ENCODE measurements at regions of chr15 and their contacts with region 1.

Region 1: DNA sequence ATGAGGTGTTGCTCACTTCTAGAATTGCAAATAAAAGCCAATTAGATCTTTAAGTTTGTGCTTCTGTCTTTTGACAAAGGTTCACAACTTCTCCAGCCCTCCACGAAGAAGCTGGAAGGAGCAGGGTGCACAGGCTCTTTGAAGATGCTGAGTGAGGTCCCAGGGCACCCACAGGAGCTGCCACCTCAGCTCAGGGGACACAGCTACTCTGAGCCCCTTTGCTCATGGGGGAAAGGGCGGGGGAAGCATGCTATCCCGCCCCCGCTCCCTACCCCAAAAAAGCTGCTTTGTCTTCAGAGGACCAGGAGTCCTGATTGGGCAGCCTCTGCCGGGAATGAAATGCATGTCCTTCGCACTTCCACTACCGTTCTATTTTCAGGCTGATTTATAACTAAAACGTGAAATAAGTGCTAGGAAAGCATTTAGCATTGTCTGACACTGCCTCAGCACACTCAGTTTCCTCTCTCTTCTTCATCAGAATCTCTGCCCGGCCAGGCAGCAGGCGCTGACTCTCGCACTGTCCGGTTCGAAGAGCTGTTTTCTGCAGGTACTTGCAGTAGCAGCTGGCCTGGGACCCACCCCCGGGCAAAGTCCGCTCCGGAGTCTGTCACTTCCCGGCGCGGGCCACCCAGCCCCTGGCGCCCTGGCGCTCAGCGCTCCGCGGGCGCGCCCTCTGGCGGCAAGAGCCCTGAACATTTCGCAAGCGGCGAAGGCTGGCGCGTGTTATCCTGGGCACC is 45.5 kb upstream of the KLHL25 start:
- DNase-seq: peak; percentile 62 to 90 (median 79)
- ATAC-seq: peak; percentile 94
- H3K4me3 ChIP-seq: peak overlapping the region; percentile 27 to 33
- H3K4me3 Mint-ChIP-seq: peak overlapping the region; percentile 68
- H3K27ac ChIP-seq: no peak overlapping the region
- H3K27ac Mint-ChIP-seq: no peak overlapping the region
- H3K4me1 ChIP-seq: peaks cover 4% of the 10 kb centered on the region
- H3K4me1 Mint-ChIP-seq: no peaks in the 10 kb centered on the region
- H3K27me3 ChIP-seq: no peaks in the 10 kb centered on the region
- H3K27me3 Mint-ChIP-seq: peaks cover 5% of the 10 kb centered on the region
- CTCF ChIP-seq: peak; percentile 93

Region 2: GRCh38 chr15:85618956-85619491 is 221.2 kb before region 1 on chr15:
- CTCF ChIA-PET with region 1: no interaction called
- POLR2A ChIA-PET with region 1: no interaction called
- intact Hi-C with region 1: loop called in 1 of 2 experiments (anchors 2 kb)
- DNase-seq: peak in 8 of 9 experiments; percentile 30 to 82 (median 59)
- ATAC-seq: peak; percentile 84
- H3K4me3 ChIP-seq: peak overlapping the region in 1 of 2 experiments; percentile 27
- H3K4me3 Mint-ChIP-seq: no peak overlapping the region
- H3K27ac ChIP-seq: peak overlapping the region in 1 of 2 experiments; percentile 58
- H3K27ac Mint-ChIP-seq: no peak overlapping the region
- H3K4me1 ChIP-seq: peaks cover 38% of the 10 kb centered on the region
- H3K4me1 Mint-ChIP-seq: peaks cover 32% of the 10 kb centered on the region
- H3K27me3 ChIP-seq: no peaks in the 10 kb centered on the region
- H3K27me3 Mint-ChIP-seq: no peaks in the 10 kb centered on the region
- CTCF ChIP-seq: no peak

Region 3: GRCh38 chr15:85730001-85730820 is 110.0 kb before region 1 on chr15:
- CTCF ChIA-PET with region 1: interaction called, 159 read pairs
- POLR2A ChIA-PET with region 1: no interaction called
- intact Hi-C with region 1: loop called (anchors 1 kb)
- DNase-seq: peak in 4 of 9 experiments; percentile 30 to 80 (median 64)
- ATAC-seq: peak; percentile 93
- H3K4me3 ChIP-seq: no peak overlapping the region
- H3K4me3 Mint-ChIP-seq: no peak overlapping the region
- H3K27ac ChIP-seq: no peak overlapping the region
- H3K27ac Mint-ChIP-seq: peak overlapping the region; percentile 34
- H3K4me1 ChIP-seq: no peaks in the 10 kb centered on the region
- H3K4me1 Mint-ChIP-seq: peaks cover 8% of the 10 kb centered on the region
- H3K27me3 ChIP-seq: no peaks in the 10 kb centered on the region
- H3K27me3 Mint-ChIP-seq: no peaks in the 10 kb centered on the region
- CTCF ChIP-seq: peak; percentile 81

Region 4: GRCh38 chr15:85741021-85741421 is 99.2 kb before region 1 on chr15:
- CTCF ChIA-PET with region 1: interaction called, 10 read pairs
- POLR2A ChIA-PET with region 1: no interaction called
- intact Hi-C with region 1: no loop called
- DNase-seq: peak in 1 of 9 experiments; percentile 43
- ATAC-seq: no peak
- H3K4me3 ChIP-seq: no peak overlapping the region
- H3K4me3 Mint-ChIP-seq: no peak overlapping the region
- H3K27ac ChIP-seq: no peak overlapping the region
- H3K27ac Mint-ChIP-seq: no peak overlapping the region
- H3K4me1 ChIP-seq: no peaks in the 10 kb centered on the region
- H3K4me1 Mint-ChIP-seq: no peaks in the 10 kb centered on the region
- H3K27me3 ChIP-seq: no peaks in the 10 kb centered on the region
- H3K27me3 Mint-ChIP-seq: no peaks in the 10 kb centered on the region
- CTCF ChIP-seq: no peak

Region 5: GRCh38 chr15:85794603-85795336 is 45.5 kb before region 1 on chr15 and contains the start of gene KLHL25:
- CTCF ChIA-PET with region 1: interaction called, 6 read pairs
- POLR2A ChIA-PET with region 1: no interaction called
- intact Hi-C with region 1: loop called in 1 of 2 experiments (anchors 2 kb)
- DNase-seq: peak; percentile 84 to 97 (median 90)
- ATAC-seq: peak; percentile 98
- H3K4me3 ChIP-seq: peak within 1 kb of the TSS; percentile 62 to 86
- H3K4me3 Mint-ChIP-seq: peak within 1 kb of the TSS; percentile 93
- H3K27ac ChIP-seq: peak within 1 kb of the TSS; percentile 40 to 56
- H3K27ac Mint-ChIP-seq: peak within 1 kb of the TSS; percentile 89
- H3K4me1 ChIP-seq: peaks cover 28% of the 10 kb centered on the region
- H3K4me1 Mint-ChIP-seq: peaks cover 39% of the 10 kb centered on the region
- H3K27me3 ChIP-seq: no peaks in the 10 kb centered on the region
- H3K27me3 Mint-ChIP-seq: peaks cover 3% of the 10 kb centered on the region
- CTCF ChIP-seq: no peak
- total RNA-seq, gene KLHL25: 4.3 to 4.9 TPM